ENCODE measurements at regions of chr2 and their contacts with region 1.

Region 1: DNA sequence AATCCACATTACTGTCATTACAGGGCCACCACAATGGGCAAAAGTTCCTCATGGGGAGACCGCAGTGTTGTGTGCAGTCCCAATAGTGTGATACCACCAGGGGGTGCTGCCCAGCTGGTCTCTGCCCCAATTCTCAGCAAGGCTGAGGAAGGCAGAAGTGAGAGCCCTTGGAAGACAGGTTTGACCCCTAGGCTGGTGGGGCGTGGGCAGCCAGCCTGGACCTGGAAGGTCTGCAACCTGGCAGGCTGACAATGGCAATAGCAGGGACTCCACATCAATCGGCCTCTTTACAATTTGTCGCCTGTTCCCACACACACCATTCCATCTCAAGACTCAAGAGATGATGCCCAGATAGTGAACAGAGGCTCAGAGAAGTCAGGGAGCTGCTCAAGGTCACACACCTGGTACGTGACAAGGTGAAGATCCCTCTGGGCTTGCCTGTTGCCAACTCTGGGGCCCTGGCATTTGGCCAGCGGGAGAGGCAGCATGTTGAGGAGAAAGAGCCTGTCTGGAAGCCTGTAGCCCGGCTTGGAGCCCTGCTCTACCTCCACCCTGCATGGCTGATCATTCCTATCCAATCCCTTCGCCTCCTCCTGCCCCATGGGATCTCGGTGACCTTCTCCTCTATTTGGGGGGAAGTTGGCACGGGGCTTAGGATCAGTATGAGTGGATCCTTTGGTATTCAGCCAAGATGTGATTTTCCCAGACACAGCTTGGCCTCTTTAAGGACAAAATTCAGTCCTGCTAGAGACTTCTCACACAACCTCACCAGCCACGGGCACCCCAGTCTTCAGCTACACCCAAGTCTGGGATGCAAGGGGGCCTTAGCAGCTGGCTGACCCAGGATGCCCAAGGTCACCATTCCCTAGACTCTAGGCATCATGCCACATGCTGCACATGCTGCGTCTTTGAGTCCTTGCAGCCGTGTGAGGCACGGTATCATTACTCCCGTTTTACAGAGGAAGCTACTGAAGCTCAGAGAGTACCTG is 2.9 kb upstream of the ATOH8 start:
- DNase-seq: peak in 5 of 6 donors; percentile 60 to 83 (median 73)
- ATAC-seq: peak; percentile 66 to 85 (median 80)
- H3K4me3 ChIP-seq: no peak overlapping the region
- H3K27ac ChIP-seq: no peak overlapping the region
- H3K4me1 ChIP-seq: peaks cover 0 to 17% (median 12%) of the 10 kb centered on the region in 3 donors
- H3K27me3 ChIP-seq: no peaks in the 10 kb centered on the region
- CTCF ChIP-seq: peak; percentile 58 to 74 (median 70)

Region 2: DNA sequence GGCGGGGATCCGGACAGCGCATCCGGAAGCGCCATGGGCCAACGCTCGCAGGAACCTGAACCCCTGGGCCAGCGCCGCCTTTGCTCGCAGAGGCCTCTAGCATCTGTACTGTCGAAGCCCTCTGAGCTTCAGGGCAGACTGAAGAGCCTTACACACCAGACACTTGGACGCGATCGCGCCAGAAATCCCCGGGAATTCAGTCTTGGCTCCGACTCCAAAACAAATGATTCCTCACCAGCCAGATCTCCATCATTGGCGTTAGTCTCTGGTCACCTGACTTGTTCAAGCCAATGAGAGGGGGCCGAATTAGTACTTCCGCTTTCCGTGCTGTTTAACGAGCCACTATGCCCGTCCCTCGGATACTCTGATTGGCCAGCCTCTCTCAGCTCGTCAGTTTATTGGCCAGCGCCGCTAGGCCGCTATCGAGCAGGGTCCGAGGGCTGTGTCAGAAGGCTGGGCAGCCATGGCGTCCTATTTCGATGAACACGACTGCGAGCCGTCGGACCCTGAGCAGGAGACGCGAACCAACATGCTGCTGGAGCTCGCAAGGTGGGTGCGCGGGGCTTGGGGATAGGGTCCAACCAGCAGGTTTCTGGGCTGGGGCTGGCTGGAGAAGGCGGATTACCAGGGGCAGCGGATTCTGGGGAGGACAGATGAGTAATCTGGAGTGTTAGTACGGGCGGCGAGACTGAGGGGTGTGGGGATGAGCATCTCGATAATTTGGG is 155.4 kb before region 1 on chr2 and contains the start of gene RNF181:
- intact Hi-C with region 1: no loop called
- DNase-seq: peak; percentile 87 to 96 (median 95)
- ATAC-seq: peak; percentile 93 to 97 (median 94)
- H3K4me3 ChIP-seq: peak within 1 kb of the TSS; percentile 56 to 83 (median 80)
- H3K27ac ChIP-seq: peak within 1 kb of the TSS; percentile 61 to 90 (median 76)
- H3K4me1 ChIP-seq: peaks cover 8 to 32% (median 29%) of the 10 kb centered on the region in 3 donors
- H3K27me3 ChIP-seq: no peaks in the 10 kb centered on the region
- CTCF ChIP-seq: no peak
- total RNA-seq, gene RNF181: 53.5 to 94.1 (median 60.2) TPM

Region 3: DNA sequence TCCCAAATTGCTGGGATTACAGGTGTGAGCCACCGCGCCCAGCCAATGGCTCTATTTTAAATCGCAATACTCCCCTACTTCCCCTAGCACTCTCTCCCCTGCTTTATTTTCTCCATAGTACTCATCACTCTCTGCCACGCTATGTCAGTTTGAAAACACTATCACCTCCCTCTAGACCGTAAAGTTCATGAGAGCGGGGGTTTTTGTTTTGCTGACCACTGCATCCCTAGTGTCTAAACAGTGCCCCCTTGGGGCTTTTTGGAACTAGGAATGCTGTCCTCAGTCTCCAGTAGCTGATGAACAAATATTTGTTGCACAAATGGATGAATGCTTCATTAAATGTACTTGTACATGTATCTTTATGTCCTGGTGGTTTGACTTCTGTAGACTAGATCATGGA is 47.0 kb after region 1 on chr2:
- intact Hi-C with region 1: loop called in 2 of 3 experiments (anchors 5 to 10 kb)
- DNase-seq: no peak
- ATAC-seq: peak in 1 of 4 donors; percentile 36
- H3K4me3 ChIP-seq: no peak overlapping the region
- H3K27ac ChIP-seq: no peak overlapping the region
- H3K4me1 ChIP-seq: peaks cover 0 to 13% (median 0%) of the 10 kb centered on the region in 3 donors
- H3K27me3 ChIP-seq: no peaks in the 10 kb centered on the region
- CTCF ChIP-seq: peak in 1 of 4 donors; percentile 14

Region 4: GRCh38 chr2:85804583-85804982 is 53.7 kb after region 1 on chr2:
- intact Hi-C with region 1: loop called in 2 of 3 experiments (anchors 5 to 10 kb)
- DNase-seq: peak in 1 of 6 donors; percentile 31
- ATAC-seq: peak in 1 of 4 donors; percentile 22
- H3K4me3 ChIP-seq: no peak overlapping the region
- H3K27ac ChIP-seq: no peak overlapping the region
- H3K4me1 ChIP-seq: no peaks in the 10 kb centered on the region
- H3K27me3 ChIP-seq: no peaks in the 10 kb centered on the region
- CTCF ChIP-seq: peak in 3 of 4 donors; percentile 25 to 29 (median 26)

Measured in pancreas (tissue), 10 donors.